ENCODE measurements at regions of chr10 and their contacts with region 1.

Region 1: GRCh38 chr10:117174439-117175214 is 22.7 kb upstream of the KCNK18 start:
- DNase-seq: peak; percentile 71 to 95
- H3K4me3 ChIP-seq: no peak overlapping the region
- CTCF ChIP-seq: peak in 1 of 3 donors; percentile 5
- POLR2A ChIP-seq: no peak

Region 2: GRCh38 chr10:116796910-116797513 is 377.6 kb before region 1 on chr10:
- intact Hi-C with region 1: loop called (anchors 2 kb)
- DNase-seq: peak; percentile 54 to 91
- H3K4me3 ChIP-seq: no peak overlapping the region
- CTCF ChIP-seq: peak in 1 of 3 donors; percentile 38
- POLR2A ChIP-seq: no peak